T-cell (primary cell): ENCODE measurements at regions of chr2 and their contacts with region 1.

Region 1: GRCh38 chr2:157420771-157421323 is 23.0 kb downstream of the CYTIP start:
- DNase-seq: peak in 1 of 35 experiments; percentile 53
- ATAC-seq: peak in 2 of 4 experiments; percentile 2 to 9
- H3K4me3 ChIP-seq: no peak overlapping the region
- H3K4me3 Mint-ChIP-seq: peak overlapping the region in 2 of 3 donors; percentile 24 to 60
- H3K27ac ChIP-seq: peak overlapping the region; percentile 91
- H3K27ac Mint-ChIP-seq: peak overlapping the region; percentile 90 to 93
- H3K4me1 ChIP-seq: peaks cover 48 to 77% of the 10 kb centered on the region in 2 experiments
- H3K4me1 Mint-ChIP-seq: peaks cover 72 to 80% (median 74%) of the 10 kb centered on the region in 3 donors
- H3K27me3 ChIP-seq: no peaks in the 10 kb centered on the region
- H3K27me3 Mint-ChIP-seq: no peaks in the 10 kb centered on the region

Region 2: DNA sequence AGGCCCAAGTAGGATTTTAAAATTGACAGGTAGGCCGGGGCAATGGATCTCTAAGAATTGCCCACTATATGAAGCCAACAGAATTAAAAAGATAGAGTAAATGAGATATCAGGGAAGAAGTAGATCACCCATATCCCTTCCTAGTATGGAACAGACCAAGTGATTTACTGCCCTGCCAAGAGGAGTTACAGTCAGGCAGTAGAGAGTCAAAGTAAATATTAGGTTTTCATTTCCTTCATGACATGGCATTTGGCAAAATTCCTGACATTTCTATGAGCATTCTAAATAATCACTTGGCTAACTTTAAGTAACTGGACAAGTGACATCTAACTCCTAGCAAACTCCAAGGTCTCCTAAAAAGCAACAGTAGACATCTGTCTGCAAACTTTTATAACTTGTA is 129.8 kb before region 1 on chr2:
- CTCF ChIA-PET with region 1: interaction called in 1 of 2 experiments, 12 read pairs
- POLR2A ChIA-PET with region 1: no interaction called
- DNase-seq: no peak
- ATAC-seq: no peak
- H3K4me3 ChIP-seq: no peak overlapping the region
- H3K4me3 Mint-ChIP-seq: no peak overlapping the region
- H3K27ac ChIP-seq: no peak overlapping the region
- H3K27ac Mint-ChIP-seq: no peak overlapping the region
- H3K4me1 ChIP-seq: no peaks in the 10 kb centered on the region
- H3K4me1 Mint-ChIP-seq: peaks cover 5 to 9% (median 6%) of the 10 kb centered on the region in 3 donors
- H3K27me3 ChIP-seq: no peaks in the 10 kb centered on the region
- H3K27me3 Mint-ChIP-seq: peaks cover 2 to 5% of the 10 kb centered on the region in 2 donors

Region 3: GRCh38 chr2:157404363-157404762 is 16.5 kb before region 1 on chr2:
- CTCF ChIA-PET with region 1: interaction called in 1 of 2 experiments, 23 read pairs
- POLR2A ChIA-PET with region 1: interaction called, 8 to 27 read pairs
- DNase-seq: peak; percentile 33 to 89 (median 69)
- ATAC-seq: peak; percentile 92 to 97 (median 94)
- H3K4me3 ChIP-seq: no peak overlapping the region
- H3K4me3 Mint-ChIP-seq: peak overlapping the region; percentile 14 to 67 (median 59)
- H3K27ac ChIP-seq: peak overlapping the region; percentile 97
- H3K27ac Mint-ChIP-seq: peak overlapping the region; percentile 99 to 100
- H3K4me1 ChIP-seq: peaks cover 32 to 36% of the 10 kb centered on the region in 2 experiments
- H3K4me1 Mint-ChIP-seq: peaks cover 68 to 81% (median 73%) of the 10 kb centered on the region in 3 donors
- H3K27me3 ChIP-seq: no peaks in the 10 kb centered on the region
- H3K27me3 Mint-ChIP-seq: no peaks in the 10 kb centered on the region